ENCODE measurements at regions of chr15 and their contacts with region 1.

Region 1: GRCh38 chr15:39381517-39381916 is 199.4 kb upstream of the THBS1 start:
- DNase-seq: no peak
- H3K4me3 ChIP-seq: no peak overlapping the region
- H3K27ac ChIP-seq: no peak overlapping the region
- H3K4me1 ChIP-seq: no peaks in the 10 kb centered on the region
- H3K27me3 ChIP-seq: no peaks in the 10 kb centered on the region
- CTCF ChIP-seq: no peak
- EP300 ChIP-seq: no peak
- POLR2A ChIP-seq: no peak

Region 2: GRCh38 chr15:39171944-39172368 is 209.6 kb before region 1 on chr15:
- intact Hi-C with region 1: no loop called
- DNase-seq: peak; percentile 82
- H3K4me3 ChIP-seq: no peak overlapping the region
- H3K27ac ChIP-seq: peak overlapping the region; percentile 73 to 78 (median 73)
- H3K4me1 ChIP-seq: peaks cover 0 to 39% (median 31%) of the 10 kb centered on the region in 4 donors
- H3K27me3 ChIP-seq: no peaks in the 10 kb centered on the region
- CTCF ChIP-seq: peak in 3 of 4 experiments; percentile 16 to 45 (median 22)
- EP300 ChIP-seq: no peak
- POLR2A ChIP-seq: no peak

Region 3: DNA sequence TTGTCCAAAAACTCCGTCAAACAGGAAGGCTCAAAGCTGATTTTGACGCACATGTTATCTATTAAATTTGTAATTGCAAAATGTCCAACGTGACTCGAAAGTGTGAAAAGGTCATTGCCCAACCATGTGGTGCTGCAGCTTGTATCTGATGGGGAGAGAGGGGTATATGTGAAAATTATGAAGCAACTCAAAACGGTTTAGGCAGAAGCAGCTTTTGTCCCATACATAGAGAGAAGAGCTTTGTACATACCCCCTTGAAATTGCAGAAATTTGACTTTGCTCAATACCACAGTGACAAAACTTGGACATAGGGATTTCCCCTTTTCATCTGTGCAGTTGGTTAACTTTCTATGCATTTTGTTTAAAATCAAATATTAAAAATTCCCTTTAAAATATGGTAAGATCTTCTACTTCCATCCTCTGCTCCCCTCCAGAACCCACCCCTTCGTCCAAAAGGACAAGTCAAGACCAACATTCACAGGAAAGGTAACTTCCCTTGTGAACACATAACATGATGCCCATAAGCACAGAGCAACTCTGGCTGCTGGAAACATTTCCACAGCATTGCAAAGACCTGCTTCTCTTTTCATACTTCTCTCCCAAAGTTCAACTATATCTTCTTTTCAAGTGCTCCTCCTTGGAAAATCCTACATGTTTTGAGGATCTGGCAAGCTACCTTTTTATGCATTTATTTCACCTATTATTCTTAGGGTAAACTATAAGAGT is 54.3 kb before region 1 on chr15:
- intact Hi-C with region 1: loop called (anchors 10 kb)
- DNase-seq: no peak
- H3K4me3 ChIP-seq: no peak overlapping the region
- H3K27ac ChIP-seq: no peak overlapping the region
- H3K4me1 ChIP-seq: peaks cover 0 to 5% (median 0%) of the 10 kb centered on the region in 4 donors
- H3K27me3 ChIP-seq: no peaks in the 10 kb centered on the region
- CTCF ChIP-seq: no peak
- EP300 ChIP-seq: no peak
- POLR2A ChIP-seq: no peak